ENCODE measurements at regions of chr6 and their contacts with region 1.

Region 1: DNA sequence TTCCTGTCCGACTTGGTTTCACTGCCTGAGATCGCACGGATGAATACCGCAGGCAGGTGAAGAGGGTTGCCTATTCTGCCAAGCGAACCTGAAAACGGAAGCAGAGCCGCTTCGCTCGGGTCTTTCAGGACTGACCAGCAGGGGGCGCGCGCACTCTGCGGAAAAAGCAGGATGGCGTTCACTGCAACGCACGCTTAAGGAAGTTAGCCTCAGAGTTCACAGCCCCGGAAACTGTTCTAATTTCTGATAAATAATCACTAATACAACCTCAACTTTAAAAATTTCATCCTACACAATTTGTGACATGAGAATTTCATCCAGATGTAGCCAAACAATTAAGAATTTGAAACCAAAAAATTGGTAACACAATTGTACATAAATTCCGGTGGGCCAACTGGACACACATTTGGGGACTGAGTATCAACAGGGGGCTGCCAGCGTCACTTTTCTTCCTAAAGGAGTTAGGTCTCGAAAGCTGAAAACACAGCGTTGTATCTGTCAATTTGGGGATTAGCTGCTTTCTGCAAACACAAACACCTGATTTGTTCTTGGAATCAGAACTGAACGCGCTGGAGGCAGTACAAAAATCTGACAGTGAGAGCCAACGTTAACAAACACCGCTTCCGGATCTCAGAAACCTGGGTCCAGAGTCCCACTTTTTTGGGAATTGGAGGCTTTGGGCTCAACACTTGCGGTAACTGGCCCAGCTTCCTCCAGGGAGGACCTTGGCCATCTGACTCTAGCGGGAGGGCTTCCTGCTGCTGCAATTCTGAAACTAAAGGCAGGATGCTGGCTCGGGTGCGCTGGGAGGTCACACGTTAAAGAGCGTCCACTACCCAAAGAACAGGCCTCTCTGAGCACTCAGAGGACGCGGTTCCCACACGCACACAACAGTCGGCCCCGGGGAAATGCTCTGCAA is 8.8 kb downstream of the PXDC1 start:
- DNase-seq: peak; percentile 92
- ATAC-seq: peak; percentile 28
- H3K4me3 ChIP-seq: peak overlapping the region in 4 of 5 experiments; percentile 26 to 44 (median 29)
- H3K4me3 Mint-ChIP-seq: peak overlapping the region; percentile 55
- H3K27ac ChIP-seq: peak overlapping the region; percentile 38 to 64
- H3K27ac Mint-ChIP-seq: peak overlapping the region; percentile 67
- H3K4me1 ChIP-seq: peaks cover 33 to 38% of the 10 kb centered on the region in 2 donors
- H3K4me1 Mint-ChIP-seq: peaks cover 47% of the 10 kb centered on the region
- H3K27me3 ChIP-seq: peaks cover 0 to 4% (median 0%) of the 10 kb centered on the region in 4 experiments
- H3K27me3 Mint-ChIP-seq: no peaks in the 10 kb centered on the region
- CTCF ChIP-seq: peak; percentile 91

Region 2: DNA sequence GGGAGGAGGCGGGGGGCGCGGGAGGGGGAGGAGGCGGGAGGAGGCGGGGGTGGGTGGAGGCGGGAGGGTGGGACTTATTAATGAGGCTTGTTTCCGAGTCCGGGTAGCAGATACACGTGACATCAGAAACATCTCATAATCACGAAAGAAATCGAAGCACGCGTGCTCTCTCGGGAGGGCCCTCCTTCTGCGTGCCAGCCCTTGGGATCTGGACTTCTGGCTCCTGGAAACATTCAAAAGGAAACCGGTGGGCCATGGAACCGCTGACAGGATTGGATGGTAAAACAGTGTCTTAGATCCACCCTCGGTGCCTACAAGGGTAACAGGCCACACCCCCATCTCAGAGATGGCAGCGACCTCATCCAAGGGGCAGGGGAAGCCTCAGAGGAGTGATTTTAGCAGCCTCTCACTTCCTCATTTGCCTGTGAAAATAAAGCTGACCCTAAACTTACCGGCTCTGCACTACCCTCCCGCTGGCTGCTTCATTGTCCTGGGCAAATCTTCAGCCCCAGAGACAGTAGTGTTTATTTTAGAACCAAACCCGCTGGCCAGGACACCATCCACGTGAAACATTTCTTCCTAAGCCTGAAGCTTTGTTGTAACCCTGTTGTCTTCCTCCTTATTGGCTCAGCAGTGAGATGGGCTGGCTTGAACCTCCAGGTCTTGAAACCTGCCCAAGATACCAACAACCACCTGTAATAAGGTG is 386.5 kb before region 1 on chr6:
- CTCF ChIA-PET with region 1: no interaction called
- POLR2A ChIA-PET with region 1: no interaction called
- intact Hi-C with region 1: loop called (anchors 5 kb)
- DNase-seq: peak; percentile 97
- ATAC-seq: peak; percentile 96
- H3K4me3 ChIP-seq: peak overlapping the region; percentile 0 to 82 (median 66)
- H3K4me3 Mint-ChIP-seq: peak overlapping the region; percentile 96
- H3K27ac ChIP-seq: peak overlapping the region; percentile 67 to 82
- H3K27ac Mint-ChIP-seq: peak overlapping the region; percentile 96
- H3K4me1 ChIP-seq: peaks cover 26 to 37% of the 10 kb centered on the region in 2 donors
- H3K4me1 Mint-ChIP-seq: peaks cover 48% of the 10 kb centered on the region
- H3K27me3 ChIP-seq: no peaks in the 10 kb centered on the region
- H3K27me3 Mint-ChIP-seq: no peaks in the 10 kb centered on the region
- CTCF ChIP-seq: no peak

Region 3: GRCh38 chr6:3654436-3655297 is 88.0 kb before region 1 on chr6:
- CTCF ChIA-PET with region 1: no interaction called
- POLR2A ChIA-PET with region 1: no interaction called
- intact Hi-C with region 1: no loop called
- DNase-seq: no peak
- ATAC-seq: no peak
- H3K4me3 ChIP-seq: no peak overlapping the region
- H3K4me3 Mint-ChIP-seq: no peak overlapping the region
- H3K27ac ChIP-seq: no peak overlapping the region
- H3K27ac Mint-ChIP-seq: no peak overlapping the region
- H3K4me1 ChIP-seq: no peaks in the 10 kb centered on the region
- H3K4me1 Mint-ChIP-seq: no peaks in the 10 kb centered on the region
- H3K27me3 ChIP-seq: no peaks in the 10 kb centered on the region
- H3K27me3 Mint-ChIP-seq: peaks cover 15% of the 10 kb centered on the region
- CTCF ChIP-seq: no peak

Region 4: DNA sequence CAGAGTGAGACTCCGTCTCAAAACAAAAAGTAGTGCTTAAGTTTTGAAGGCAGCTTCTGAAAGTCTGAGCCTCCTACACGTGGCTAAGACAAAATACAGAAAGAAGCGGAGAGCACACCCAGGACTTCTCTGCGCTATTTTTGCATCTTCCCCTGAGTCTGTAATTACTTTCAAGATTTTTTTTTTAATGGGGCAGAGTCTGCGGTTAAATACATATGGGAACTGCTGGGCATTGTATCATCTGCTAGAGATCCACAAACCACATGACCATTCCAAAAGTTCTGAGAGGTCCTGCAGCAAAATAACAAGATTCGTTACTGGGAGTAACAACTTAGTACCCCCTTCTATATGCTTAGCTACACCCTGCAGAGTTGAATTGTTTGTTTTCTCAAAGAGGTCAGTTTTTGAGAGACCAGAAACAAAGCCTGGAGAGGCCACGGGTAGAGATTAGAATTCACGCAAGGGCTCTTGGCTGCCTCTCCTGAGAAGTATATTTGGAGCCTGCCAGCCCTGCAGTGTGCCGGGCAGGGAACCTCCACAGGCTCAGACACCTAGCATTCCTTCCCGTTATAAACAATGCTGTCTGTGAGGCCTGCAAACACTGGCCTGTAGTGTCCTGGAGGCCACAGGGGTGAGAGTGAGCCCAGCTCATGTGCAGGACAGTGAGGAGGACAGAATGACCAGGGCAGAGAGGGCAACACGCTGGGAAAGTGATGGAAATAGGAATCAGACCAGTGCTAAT is 58.3 kb after region 1 on chr6:
- CTCF ChIA-PET with region 1: no interaction called
- POLR2A ChIA-PET with region 1: no interaction called
- intact Hi-C with region 1: loop called (anchors 2 kb)
- DNase-seq: no peak
- ATAC-seq: no peak
- H3K4me3 ChIP-seq: no peak overlapping the region
- H3K4me3 Mint-ChIP-seq: no peak overlapping the region
- H3K27ac ChIP-seq: no peak overlapping the region
- H3K27ac Mint-ChIP-seq: no peak overlapping the region
- H3K4me1 ChIP-seq: peaks cover 16 to 22% of the 10 kb centered on the region in 2 donors
- H3K4me1 Mint-ChIP-seq: peaks cover 46% of the 10 kb centered on the region
- H3K27me3 ChIP-seq: no peaks in the 10 kb centered on the region
- H3K27me3 Mint-ChIP-seq: no peaks in the 10 kb centered on the region
- CTCF ChIP-seq: no peak

Region 5: GRCh38 chr6:3929281-3929798 is 186.7 kb after region 1 on chr6:
- CTCF ChIA-PET with region 1: interaction called, 37 read pairs
- POLR2A ChIA-PET with region 1: no interaction called
- intact Hi-C with region 1: loop called (anchors 1 kb)
- DNase-seq: no peak
- ATAC-seq: no peak
- H3K4me3 ChIP-seq: no peak overlapping the region
- H3K4me3 Mint-ChIP-seq: no peak overlapping the region
- H3K27ac ChIP-seq: no peak overlapping the region
- H3K27ac Mint-ChIP-seq: no peak overlapping the region
- H3K4me1 ChIP-seq: no peaks in the 10 kb centered on the region
- H3K4me1 Mint-ChIP-seq: no peaks in the 10 kb centered on the region
- H3K27me3 ChIP-seq: no peaks in the 10 kb centered on the region
- H3K27me3 Mint-ChIP-seq: peaks cover 7% of the 10 kb centered on the region
- CTCF ChIP-seq: no peak

Region 6: GRCh38 chr6:4008324-4009047 is 265.8 kb after region 1 on chr6:
- CTCF ChIA-PET with region 1: interaction called, 8 read pairs
- POLR2A ChIA-PET with region 1: no interaction called
- intact Hi-C with region 1: loop called (anchors 1 kb)
- DNase-seq: peak; percentile 67
- ATAC-seq: peak; percentile 58
- H3K4me3 ChIP-seq: no peak overlapping the region
- H3K4me3 Mint-ChIP-seq: no peak overlapping the region
- H3K27ac ChIP-seq: no peak overlapping the region
- H3K27ac Mint-ChIP-seq: no peak overlapping the region
- H3K4me1 ChIP-seq: peaks cover 5 to 6% of the 10 kb centered on the region in 2 donors
- H3K4me1 Mint-ChIP-seq: peaks cover 30% of the 10 kb centered on the region
- H3K27me3 ChIP-seq: no peaks in the 10 kb centered on the region
- H3K27me3 Mint-ChIP-seq: no peaks in the 10 kb centered on the region
- CTCF ChIP-seq: peak; percentile 72

Region 7: GRCh38 chr6:4210629-4211423 is 468.1 kb after region 1 on chr6:
- CTCF ChIA-PET with region 1: interaction called, 4 read pairs
- POLR2A ChIA-PET with region 1: no interaction called
- intact Hi-C with region 1: loop called (anchors 2 kb)
- DNase-seq: peak; percentile 72
- ATAC-seq: peak; percentile 94
- H3K4me3 ChIP-seq: no peak overlapping the region
- H3K4me3 Mint-ChIP-seq: peak overlapping the region; percentile 65
- H3K27ac ChIP-seq: peak overlapping the region in 1 of 2 donors; percentile 0
- H3K27ac Mint-ChIP-seq: peak overlapping the region; percentile 86
- H3K4me1 ChIP-seq: peaks cover 28 to 34% of the 10 kb centered on the region in 2 donors
- H3K4me1 Mint-ChIP-seq: peaks cover 35% of the 10 kb centered on the region
- H3K27me3 ChIP-seq: peaks cover 0 to under 1% (median under 1%) of the 10 kb centered on the region in 4 experiments
- H3K27me3 Mint-ChIP-seq: peaks cover 3% of the 10 kb centered on the region
- CTCF ChIP-seq: peak; percentile 83

Measured in B cell (primary cell).